Stomach (tissue), 19 donors: ENCODE measurements at regions of chr11 and their contacts with region 1.

Region 1: GRCh38 chr11:66264924-66265331 is 3.5 kb upstream of the RAB1B start:
- DNase-seq: peak; percentile 36 to 39
- H3K4me3 ChIP-seq: no peak overlapping the region
- H3K27ac ChIP-seq: no peak overlapping the region
- H3K4me1 ChIP-seq: peaks cover 13 to 30% (median 28%) of the 10 kb centered on the region in 4 donors
- H3K27me3 ChIP-seq: no peaks in the 10 kb centered on the region
- CTCF ChIP-seq: peak in 2 of 7 experiments; percentile 24 to 27
- EP300 ChIP-seq: no peak
- POLR2A ChIP-seq: no peak

Region 2: DNA sequence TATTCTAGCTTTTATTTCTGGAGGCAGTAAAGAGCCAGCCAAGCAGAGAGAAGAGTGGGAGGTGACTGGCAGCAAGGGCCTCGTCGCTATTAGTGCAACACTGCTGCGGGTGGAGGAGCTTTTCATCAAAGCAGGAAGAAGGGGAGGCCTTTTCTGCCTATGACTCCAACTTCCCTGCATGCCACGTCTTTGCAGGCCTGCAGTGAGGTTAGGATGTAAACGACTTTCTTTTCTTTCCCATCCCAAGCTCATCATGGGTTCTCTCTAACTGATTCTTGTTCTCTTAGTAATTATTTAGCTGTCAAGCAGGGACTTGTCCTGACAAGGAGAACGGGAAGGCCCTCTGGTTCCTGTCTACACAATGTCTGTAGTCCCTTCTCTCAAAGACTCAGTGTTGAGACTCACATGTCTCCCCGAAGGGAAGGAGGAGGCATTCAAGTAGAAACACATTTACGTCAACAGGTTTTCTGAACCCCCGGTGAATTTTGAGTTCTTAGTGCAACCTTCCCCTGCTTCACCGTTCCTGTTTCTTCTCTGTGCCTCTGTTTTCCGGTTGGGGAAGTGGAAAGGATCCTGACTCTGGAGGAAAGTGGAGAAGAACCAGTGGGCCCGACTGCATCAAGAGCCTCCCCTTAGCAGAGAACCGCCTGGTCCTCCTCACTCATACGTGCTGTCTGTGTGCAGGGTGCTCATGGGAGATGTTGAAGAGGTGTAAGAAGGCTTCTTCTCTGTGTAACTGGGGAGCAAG is 137.9 kb before region 1 on chr11:
- intact Hi-C with region 1: no loop called
- DNase-seq: peak; percentile 56 to 85
- H3K4me3 ChIP-seq: no peak overlapping the region
- H3K27ac ChIP-seq: peak overlapping the region; percentile 53 to 81 (median 71)
- H3K4me1 ChIP-seq: peaks cover 19 to 43% (median 35%) of the 10 kb centered on the region in 4 donors
- H3K27me3 ChIP-seq: no peaks in the 10 kb centered on the region
- CTCF ChIP-seq: no peak
- EP300 ChIP-seq: no peak
- POLR2A ChIP-seq: no peak

Region 3: DNA sequence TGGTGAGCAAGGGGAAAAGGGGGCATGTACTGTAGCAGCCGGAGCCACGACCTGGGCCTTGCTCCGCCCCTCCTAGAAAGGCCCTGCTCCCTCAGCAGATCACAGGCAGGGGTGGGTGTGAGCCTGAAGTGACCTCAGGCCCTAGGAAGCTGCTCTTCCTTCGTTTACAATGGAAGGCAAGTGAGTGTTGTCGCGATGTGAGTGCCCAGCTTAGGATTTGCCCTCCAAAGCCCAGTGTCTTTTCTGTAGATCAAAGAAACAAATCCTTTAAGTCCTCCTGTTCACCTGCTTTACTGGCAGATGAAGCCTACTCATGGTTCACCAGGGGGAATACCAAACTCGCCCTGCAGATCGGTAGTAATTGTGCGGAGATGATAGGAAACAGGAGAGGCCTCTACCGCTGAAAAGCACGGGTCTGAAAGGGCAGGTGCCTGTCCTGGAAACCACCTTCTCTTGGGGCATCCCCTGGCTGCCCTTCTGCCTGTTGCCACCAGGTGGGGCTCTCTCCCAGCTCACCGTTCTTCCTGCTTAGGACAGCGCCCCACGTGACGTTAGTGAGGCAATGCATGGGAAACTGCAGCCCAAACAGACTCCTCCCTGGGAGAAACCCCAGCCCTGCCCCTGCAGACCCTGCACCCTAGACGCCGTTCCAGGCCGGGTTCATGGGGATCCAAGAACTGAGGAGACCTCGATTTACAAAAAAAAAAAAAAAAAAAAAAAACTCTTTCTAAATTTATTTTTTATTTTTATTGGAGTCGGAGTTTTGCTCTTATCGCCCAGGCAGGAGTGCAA is 42.4 kb before region 1 on chr11:
- intact Hi-C with region 1: loop called (anchors 5 kb)
- DNase-seq: peak; percentile 93 to 97
- H3K4me3 ChIP-seq: no peak overlapping the region
- H3K27ac ChIP-seq: peak overlapping the region in 2 of 5 donors; percentile 18 to 35
- H3K4me1 ChIP-seq: peaks cover 0 to 11% (median 9%) of the 10 kb centered on the region in 4 donors
- H3K27me3 ChIP-seq: no peaks in the 10 kb centered on the region
- CTCF ChIP-seq: peak in 5 of 7 experiments; percentile 98 to 100 (median 99)
- EP300 ChIP-seq: no peak
- POLR2A ChIP-seq: no peak